Sciatic nerve (tissue), 2 donors: ENCODE measurements at regions of chr19 and their contacts with region 1.

Region 1: GRCh38 chr19:49862376-49863253 is 4.8 kb downstream of the PNKP start:
- DNase-seq: no peak
- ATAC-seq: no peak

Region 2: GRCh38 chr19:48190288-48190884 is 1672.2 kb before region 1 on chr19:
- intact Hi-C with region 1: loop called (anchors 5 kb)
- DNase-seq: peak; percentile 50
- ATAC-seq: no peak

Region 3: DNA sequence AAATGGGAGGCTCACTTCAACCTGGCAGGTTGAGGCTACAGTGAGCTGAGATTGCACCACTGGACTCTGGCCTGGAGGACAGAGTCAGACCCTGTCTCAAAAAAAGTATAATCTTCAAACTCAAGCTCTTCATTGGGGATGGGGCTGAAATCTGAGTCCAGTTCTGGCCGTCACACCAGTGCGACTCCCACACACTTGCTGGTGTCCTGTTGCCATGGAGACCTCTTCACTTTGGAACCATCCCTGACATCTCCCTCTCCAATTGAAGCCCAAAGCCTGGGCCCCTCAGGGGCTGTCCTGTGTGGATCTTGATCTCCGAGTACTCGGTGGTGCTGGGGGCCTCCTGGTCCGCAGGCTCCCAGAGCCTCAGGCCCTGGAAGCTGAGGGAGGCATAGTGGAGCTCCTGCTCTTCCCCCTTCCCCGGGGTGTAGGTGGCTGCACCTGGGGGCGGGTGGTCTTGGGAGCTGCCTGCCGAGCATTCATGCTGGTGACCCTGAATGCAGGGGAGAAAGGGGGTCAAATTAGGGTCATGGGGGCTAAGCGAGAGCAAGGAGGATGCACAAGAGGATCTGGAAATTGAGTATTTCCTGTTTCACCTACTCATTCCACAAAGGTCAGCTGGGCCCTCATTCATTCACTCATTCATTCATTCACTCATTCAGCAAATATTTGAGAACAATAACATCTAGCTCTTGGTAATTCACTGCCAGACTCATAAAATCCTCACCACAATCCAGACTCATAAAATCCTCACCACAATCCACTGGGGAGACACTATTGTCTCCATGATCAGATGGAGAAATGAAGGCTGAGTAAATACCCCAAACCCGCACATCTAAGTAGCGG is 87.4 kb after region 1 on chr19:
- intact Hi-C with region 1: no loop called
- DNase-seq: no peak
- ATAC-seq: no peak

Region 4: DNA sequence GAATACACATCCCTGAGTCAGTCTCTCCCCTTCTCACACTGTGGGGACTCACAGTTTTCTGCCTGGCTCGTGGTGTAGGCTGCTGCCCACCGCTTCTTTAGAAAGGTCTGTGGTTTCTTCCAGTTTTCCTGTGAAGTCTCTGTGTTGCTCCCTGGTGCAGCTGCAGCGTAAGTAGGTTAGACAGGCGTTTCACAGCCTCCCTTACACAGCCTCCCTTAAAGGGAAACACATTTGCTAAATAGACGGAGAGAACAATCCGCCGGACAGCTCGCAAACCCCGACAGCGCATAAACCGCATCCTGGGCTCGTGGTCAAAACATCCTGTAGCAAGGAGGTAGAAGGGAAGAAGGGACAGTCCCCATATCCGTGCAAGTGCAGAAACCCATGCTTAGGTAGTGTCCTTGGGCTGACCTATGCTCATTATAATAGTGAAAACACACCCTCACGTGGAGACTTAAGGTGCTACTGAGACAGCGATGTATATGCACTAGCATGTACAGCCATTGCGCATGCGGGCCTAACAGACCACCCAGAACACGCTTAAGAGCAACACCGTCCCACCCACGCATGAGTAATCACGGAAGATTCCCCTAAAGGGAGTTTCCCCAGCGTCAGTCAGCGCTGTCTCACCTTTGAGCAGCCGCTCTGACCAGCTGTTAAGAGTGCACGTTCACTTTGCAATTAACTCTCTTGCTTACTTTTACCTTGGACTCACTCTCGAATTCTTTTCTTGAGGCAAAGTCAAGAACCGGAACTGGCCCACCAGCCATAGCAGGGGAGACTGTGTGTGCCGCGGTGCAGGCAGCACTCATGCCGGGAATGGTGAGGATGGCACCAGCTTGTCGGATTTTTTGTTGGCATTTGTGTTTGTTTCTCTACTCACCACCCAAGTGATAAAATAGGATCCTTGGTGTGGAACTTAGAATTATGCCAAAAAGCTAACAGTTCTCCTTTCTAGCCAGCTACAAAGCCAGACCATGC is 1579.1 kb after region 1 on chr19:
- intact Hi-C with region 1: loop called (anchors 5 kb)
- DNase-seq: no peak
- ATAC-seq: peak; percentile 15